Psoas muscle (tissue), 8 donors: ENCODE measurements at regions of chr17 and their contacts with region 1.

Region 1: DNA sequence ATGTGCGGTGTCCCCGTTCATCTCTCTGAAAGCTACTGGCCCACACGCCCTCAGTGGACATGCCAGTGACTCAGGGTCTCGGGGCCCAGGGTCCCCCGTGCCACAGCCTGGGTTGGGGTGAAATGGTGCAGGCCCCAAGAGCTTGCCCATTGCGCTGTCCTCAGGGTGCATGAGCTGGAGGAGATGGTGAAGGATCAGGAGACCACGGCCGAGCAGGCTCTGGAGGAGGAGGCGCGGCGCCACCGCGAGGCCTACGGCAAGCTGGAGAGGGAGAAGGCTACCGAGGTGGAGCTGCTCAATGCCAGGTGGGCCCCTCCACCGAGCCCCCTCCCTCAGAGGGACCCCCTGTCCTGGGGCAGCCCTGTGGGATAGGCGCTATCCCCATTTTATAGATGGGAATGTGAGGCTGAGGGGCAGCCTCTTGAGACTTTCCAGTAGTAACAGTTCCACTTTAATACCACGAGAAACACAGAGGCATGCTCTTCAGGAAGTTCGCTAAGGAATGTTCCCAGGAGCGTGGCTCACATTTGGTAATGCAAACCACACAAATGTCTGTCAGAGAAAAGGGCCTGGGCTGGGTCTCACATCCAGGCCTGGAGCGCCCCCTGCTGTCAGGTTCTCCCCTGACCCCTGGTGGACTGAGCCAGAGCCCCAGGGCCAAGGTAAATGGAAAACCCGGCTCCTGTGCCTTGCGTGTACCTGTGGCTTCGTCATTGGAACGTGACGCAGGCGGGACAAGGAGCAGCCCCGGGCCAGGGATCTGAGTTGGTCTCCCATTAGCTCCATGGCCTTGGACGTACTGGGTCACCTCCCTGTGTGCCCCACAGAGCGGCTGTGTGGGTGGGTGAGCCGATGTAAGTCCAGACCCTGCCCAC is 133.7 kb downstream of the RAB11FIP4 start:
- DNase-seq: peak; percentile 88 to 92
- ATAC-seq: peak; percentile 92 to 98 (median 95)
- H3K4me3 ChIP-seq: no peak overlapping the region
- H3K27ac ChIP-seq: no peak overlapping the region
- H3K4me1 ChIP-seq: no peaks in the 10 kb centered on the region
- H3K27me3 ChIP-seq: no peaks in the 10 kb centered on the region
- CTCF ChIP-seq: peak; percentile 95

Region 2: DNA sequence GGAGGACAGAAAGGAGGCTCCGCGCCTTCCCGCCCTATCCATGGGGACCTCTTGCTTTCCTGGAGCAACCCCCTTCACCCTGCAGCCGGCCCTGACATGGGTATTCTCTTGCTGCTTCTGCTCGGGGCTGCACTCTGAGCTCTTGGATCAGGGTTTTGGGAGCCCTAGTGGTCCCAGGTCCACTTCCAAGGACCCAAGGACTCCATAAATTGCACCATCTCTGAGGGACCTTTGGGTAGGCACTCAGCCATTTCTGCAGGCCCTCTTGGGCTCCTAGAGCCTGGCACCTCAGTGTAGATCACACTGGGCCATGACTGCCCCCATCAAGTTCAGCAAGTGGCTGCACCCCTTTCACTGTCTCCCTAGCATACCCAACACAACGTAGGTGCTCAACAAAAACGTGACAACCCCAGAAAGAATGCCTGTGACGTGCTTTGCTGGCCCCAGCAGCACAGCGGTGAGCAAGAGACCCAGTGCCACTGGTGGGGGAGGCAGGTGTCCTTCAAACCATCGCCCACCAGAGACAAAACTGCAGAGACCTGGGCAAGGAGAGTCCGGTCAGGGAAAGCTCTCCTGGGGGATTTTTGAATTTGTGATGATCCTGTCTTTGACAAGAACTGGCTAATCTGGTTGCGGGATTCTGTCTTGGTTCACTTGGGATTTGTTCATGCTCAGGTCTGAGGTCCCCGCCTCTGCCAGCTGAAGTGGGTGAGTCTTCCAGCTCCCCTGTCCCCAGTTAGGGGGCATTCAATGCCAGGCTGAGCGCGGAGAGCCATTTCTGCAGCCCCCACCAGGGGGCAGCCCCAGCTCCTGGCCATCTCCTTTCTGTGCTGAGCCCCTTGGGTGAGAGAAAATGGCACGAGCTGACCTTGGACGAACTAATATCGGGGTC is 136.1 kb before region 1 on chr17:
- intact Hi-C with region 1: loop called in 1 of 2 experiments (anchors 2 kb)
- DNase-seq: no peak
- ATAC-seq: peak in 2 of 4 donors; percentile 47 to 48
- H3K4me3 ChIP-seq: no peak overlapping the region
- H3K27ac ChIP-seq: no peak overlapping the region
- H3K4me1 ChIP-seq: no peaks in the 10 kb centered on the region
- H3K27me3 ChIP-seq: peaks cover 0 to 51% (median 17%) of the 10 kb centered on the region in 3 donors
- CTCF ChIP-seq: peak; percentile 47

Region 3: DNA sequence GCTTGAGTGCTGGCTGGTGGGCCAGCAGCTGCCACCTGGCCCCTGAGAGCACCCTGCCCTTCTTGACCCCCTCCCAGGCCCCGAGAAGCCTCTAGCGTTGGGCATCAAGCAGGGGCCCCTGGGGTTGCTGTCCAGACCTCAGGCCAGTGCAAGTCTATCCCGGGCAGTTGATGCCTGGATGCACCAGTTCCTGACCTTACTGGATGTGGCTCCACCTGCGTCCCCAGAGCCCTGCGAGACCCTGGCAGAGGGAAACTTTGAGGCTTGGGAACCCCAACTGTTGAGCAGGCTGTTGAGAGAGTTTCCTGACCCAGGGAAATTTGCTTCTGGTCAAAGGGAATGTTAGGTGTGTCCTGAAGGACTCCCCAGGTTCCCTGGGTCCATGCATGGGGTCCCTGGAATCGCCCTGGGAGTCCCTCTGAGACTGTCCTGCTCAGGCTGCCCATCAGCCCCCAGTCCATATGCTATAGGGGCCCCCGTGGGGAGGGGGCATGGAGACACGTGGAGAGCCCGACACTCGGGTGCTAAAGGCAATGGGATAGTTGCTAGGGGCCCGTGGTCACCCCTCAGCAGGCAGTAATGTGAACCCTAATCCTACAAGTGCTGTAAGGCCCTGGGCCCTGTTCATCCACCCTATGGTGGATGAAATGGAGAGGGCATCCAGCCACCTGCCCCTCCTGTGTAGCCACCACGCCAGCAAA is 87.3 kb before region 1 on chr17:
- intact Hi-C with region 1: loop called (anchors 1 kb)
- DNase-seq: peak in 1 of 2 donors; percentile 39
- ATAC-seq: peak in 3 of 4 donors; percentile 11 to 22 (median 19)
- H3K4me3 ChIP-seq: no peak overlapping the region
- H3K27ac ChIP-seq: no peak overlapping the region
- H3K4me1 ChIP-seq: no peaks in the 10 kb centered on the region
- H3K27me3 ChIP-seq: no peaks in the 10 kb centered on the region
- CTCF ChIP-seq: no peak